ENCODE measurements at regions of chr2 and their contacts with region 1.

Region 1: DNA sequence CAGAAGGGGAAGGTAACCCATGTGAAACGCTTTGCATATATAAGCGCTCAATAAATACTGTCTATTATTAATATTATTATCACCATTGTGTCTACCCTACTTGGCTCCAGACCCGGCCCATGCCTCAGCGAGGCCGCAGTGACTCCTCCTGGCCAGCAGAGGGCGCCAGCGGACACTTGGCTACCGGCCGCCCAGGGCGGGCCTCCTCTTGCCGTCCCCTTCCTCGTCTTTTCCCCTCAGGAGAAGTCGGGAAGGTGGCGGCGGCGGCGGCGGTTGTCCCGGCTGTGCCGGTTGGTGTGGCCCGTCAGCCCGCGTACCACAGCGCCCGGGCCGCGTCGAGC is at the start of gene AGFG1:
- DNase-seq: peak; percentile 72 to 93 (median 82)
- H3K4me3 ChIP-seq: peak within 1 kb of the TSS; percentile 54 to 95 (median 85)
- H3K27ac ChIP-seq: peak within 1 kb of the TSS in 55 of 59 donors; percentile 34 to 93 (median 79)
- H3K27me3 ChIP-seq: no peaks in the 10 kb centered on the region
- CTCF ChIP-seq: peak; percentile 93 to 100 (median 98)
- total RNA-seq, gene AGFG1: 79.9 to 144 (median 106) TPM

Region 2: GRCh38 chr2:227324995-227325838 is 146.7 kb before region 1 on chr2 and contains the start of gene MFF:
- intact Hi-C with region 1: loop called (anchors 5 to 10 kb)
- DNase-seq: peak; percentile 83 to 95 (median 92)
- H3K4me3 ChIP-seq: peak within 1 kb of the TSS; percentile 70 to 100 (median 97)
- H3K27ac ChIP-seq: peak within 1 kb of the TSS; percentile 27 to 98 (median 93)
- H3K27me3 ChIP-seq: no peaks in the 10 kb centered on the region
- CTCF ChIP-seq: peak in 51 of 56 donors; percentile 1 to 71 (median 40)
- total RNA-seq, gene MFF: 80.8 to 145 (median 108) TPM

Region 3: GRCh38 chr2:227406177-227407031 is 65.5 kb before region 1 on chr2:
- intact Hi-C with region 1: loop called in 1 of 2 experiments (anchors 5 kb)
- DNase-seq: peak in 6 of 10 donors; percentile 26 to 67 (median 60)
- H3K4me3 ChIP-seq: peak overlapping the region in 19 of 59 donors; percentile 2 to 40 (median 16)
- H3K27ac ChIP-seq: peak overlapping the region in 58 of 59 donors; percentile 28 to 93 (median 81)
- H3K27me3 ChIP-seq: no peaks in the 10 kb centered on the region
- CTCF ChIP-seq: peak; percentile 30 to 80 (median 71)

Region 4: GRCh38 chr2:227415538-227416424 is 56.1 kb before region 1 on chr2:
- intact Hi-C with region 1: loop called in 1 of 2 experiments (anchors 5 kb)
- DNase-seq: peak in 1 of 10 donors; percentile 47
- H3K4me3 ChIP-seq: peak overlapping the region in 1 of 59 donors; percentile 1
- H3K27ac ChIP-seq: peak overlapping the region; percentile 20 to 92 (median 78)
- H3K27me3 ChIP-seq: no peaks in the 10 kb centered on the region
- CTCF ChIP-seq: no peak

Region 5: GRCh38 chr2:227503433-227504406 is 31.8 kb after region 1 on chr2:
- intact Hi-C with region 1: no loop called
- DNase-seq: peak in 1 of 10 donors; percentile 54
- H3K4me3 ChIP-seq: no peak overlapping the region
- H3K27ac ChIP-seq: peak overlapping the region in 19 of 59 donors; percentile 2 to 54 (median 21)
- H3K27me3 ChIP-seq: no peaks in the 10 kb centered on the region
- CTCF ChIP-seq: no peak

Region 6: DNA sequence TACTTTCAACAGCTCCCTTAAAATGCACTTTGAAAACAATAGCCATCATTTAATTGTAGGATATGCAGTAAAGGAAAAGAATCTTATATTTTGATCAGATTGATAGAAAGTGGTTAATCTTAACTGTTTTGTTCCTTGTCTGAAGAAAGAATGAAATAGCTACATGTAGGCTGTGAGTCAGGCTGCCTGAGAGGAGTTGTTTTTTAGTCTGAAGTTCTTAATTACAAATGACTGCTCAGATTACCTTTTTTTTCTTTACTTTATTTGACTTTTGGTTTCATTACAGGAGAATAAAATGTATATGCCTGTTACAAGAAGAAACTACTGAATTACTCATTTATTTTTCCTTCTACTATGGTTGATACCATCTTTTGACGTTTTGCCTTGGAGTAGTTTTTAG is 56.9 kb after region 1 on chr2:
- intact Hi-C with region 1: no loop called
- DNase-seq: no peak
- H3K4me3 ChIP-seq: no peak overlapping the region
- H3K27ac ChIP-seq: no peak overlapping the region
- H3K27me3 ChIP-seq: no peaks in the 10 kb centered on the region
- CTCF ChIP-seq: no peak

Region 7: DNA sequence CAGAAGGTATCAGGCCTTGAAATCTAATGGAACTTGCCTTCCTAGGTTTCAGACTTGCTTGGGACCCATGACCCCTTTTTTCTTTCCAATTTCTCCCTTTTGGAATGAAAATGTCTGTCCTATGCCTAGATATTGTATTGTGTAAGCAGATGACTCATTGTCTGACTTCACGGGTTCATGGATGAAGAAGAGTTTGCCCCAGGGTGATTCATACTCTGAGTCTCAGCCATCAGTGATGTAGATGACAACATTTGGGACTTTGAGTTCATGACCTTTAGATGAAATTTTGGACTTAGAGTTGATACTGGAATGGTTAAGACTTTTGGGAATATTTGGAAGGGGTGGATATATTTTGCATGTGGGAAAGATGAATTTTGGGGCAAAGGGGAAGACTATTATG is 183.6 kb after region 1 on chr2:
- intact Hi-C with region 1: loop called in 1 of 2 experiments (anchors 5 kb)
- DNase-seq: no peak
- H3K4me3 ChIP-seq: no peak overlapping the region
- H3K27ac ChIP-seq: no peak overlapping the region
- H3K27me3 ChIP-seq: no peaks in the 10 kb centered on the region
- CTCF ChIP-seq: no peak